ENCODE measurements at regions of chr2 and their contacts with region 1.

Region 1: DNA sequence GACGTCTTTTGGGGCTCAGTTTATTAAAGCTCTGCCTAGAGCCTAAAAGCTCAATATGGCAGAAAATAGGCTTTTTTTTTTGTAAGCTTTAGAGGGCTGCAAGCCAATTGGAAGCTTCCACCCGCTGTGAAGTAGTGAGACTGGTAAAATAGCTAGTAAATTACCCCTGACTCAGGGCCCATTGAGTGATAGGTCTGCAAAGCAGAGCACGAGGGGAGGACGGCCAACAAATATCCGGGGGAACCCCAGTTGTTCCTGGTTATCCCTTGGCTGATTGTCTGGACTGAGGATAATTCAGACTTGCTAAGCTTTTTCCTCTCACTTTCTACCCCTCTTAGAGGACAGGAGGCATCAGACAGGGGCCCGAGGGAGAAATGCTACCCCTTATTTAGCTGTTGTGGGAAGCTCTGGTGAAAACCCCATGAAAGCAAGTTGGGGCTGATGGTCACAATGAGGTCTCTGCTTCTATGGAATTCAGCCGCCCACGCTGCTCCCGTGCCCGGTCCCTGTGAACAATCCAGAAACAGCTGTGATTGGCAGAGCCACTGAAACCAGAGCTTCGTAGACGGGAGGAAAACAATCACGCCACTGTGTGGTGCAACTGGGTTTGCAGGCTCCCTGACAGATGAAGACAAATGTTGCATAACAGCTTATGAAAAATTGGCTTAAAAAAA is 141.9 kb upstream of the LGALSL start:
- DNase-seq: peak; percentile 89
- H3K4me3 ChIP-seq: no peak overlapping the region
- H3K27ac ChIP-seq: no peak overlapping the region
- H3K4me1 ChIP-seq: no peaks in the 10 kb centered on the region
- H3K27me3 ChIP-seq: peaks cover 0 to 7% of the 10 kb centered on the region in 2 experiments
- CTCF ChIP-seq: peak; percentile 48 to 68
- POLR2A ChIP-seq: no peak

Region 2: GRCh38 chr2:64052468-64053241 is 259.4 kb before region 1 on chr2:
- CTCF ChIA-PET with region 1: interaction called, 179 read pairs
- POLR2A ChIA-PET with region 1: no interaction called
- dilution Hi-C with region 1: loop called (anchors 25 kb)
- intact Hi-C with region 1: loop called (anchors 1 kb)
- DNase-seq: peak; percentile 94
- H3K4me3 ChIP-seq: peak overlapping the region in 1 of 3 experiments; percentile 20
- H3K27ac ChIP-seq: peak overlapping the region; percentile 96
- H3K4me1 ChIP-seq: peaks cover 28% of the 10 kb centered on the region
- H3K27me3 ChIP-seq: no peaks in the 10 kb centered on the region
- CTCF ChIP-seq: no peak
- POLR2A ChIP-seq: no peak

Region 3: DNA sequence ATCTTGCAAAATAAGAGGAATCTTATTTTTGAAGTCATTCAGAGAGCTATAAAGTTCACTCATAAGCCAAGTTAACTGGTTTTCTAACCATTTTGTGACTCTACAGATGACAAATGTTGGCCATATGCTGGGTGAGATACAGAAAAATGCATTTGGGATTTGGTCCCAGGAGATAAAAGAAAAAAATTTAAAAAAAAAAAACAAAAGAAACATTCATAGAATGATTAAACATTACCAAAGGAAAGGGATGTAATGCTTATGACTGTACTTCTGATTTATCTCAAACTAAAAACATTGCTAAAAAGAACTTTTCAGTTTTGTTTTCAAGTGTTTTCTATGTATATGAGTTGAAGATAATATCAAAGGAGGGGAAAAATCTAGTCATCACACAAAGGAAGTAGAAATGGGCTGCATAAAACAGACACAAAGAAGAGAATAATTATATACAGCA is 210.9 kb before region 1 on chr2:
- CTCF ChIA-PET with region 1: interaction called, 51 read pairs
- POLR2A ChIA-PET with region 1: no interaction called
- dilution Hi-C with region 1: no loop called
- intact Hi-C with region 1: no loop called
- DNase-seq: peak; percentile 84
- H3K4me3 ChIP-seq: peak overlapping the region in 1 of 3 experiments; percentile 34
- H3K27ac ChIP-seq: peak overlapping the region; percentile 60
- H3K4me1 ChIP-seq: peaks cover 39% of the 10 kb centered on the region
- H3K27me3 ChIP-seq: no peaks in the 10 kb centered on the region
- CTCF ChIP-seq: no peak
- POLR2A ChIP-seq: no peak

Region 4: GRCh38 chr2:64217198-64217869 is 94.8 kb before region 1 on chr2:
- CTCF ChIA-PET with region 1: interaction called, 23 read pairs
- POLR2A ChIA-PET with region 1: no interaction called
- dilution Hi-C with region 1: no loop called
- intact Hi-C with region 1: no loop called
- DNase-seq: no peak
- H3K4me3 ChIP-seq: no peak overlapping the region
- H3K27ac ChIP-seq: no peak overlapping the region
- H3K4me1 ChIP-seq: no peaks in the 10 kb centered on the region
- H3K27me3 ChIP-seq: peaks cover 0 to 2% of the 10 kb centered on the region in 2 experiments
- CTCF ChIP-seq: no peak
- POLR2A ChIP-seq: no peak

Region 5: GRCh38 chr2:64260817-64261216 is 51.3 kb before region 1 on chr2:
- CTCF ChIA-PET with region 1: interaction called, 18 read pairs
- POLR2A ChIA-PET with region 1: no interaction called
- dilution Hi-C with region 1: no loop called
- intact Hi-C with region 1: loop called (anchors 1 kb)
- DNase-seq: peak; percentile 82
- H3K4me3 ChIP-seq: peak overlapping the region in 1 of 3 experiments; percentile 2
- H3K27ac ChIP-seq: peak overlapping the region; percentile 99
- H3K4me1 ChIP-seq: peaks cover 44% of the 10 kb centered on the region
- H3K27me3 ChIP-seq: no peaks in the 10 kb centered on the region
- CTCF ChIP-seq: no peak
- POLR2A ChIP-seq: peak; percentile 48

Region 6: GRCh38 chr2:64273524-64274398 is 38.3 kb before region 1 on chr2:
- CTCF ChIA-PET with region 1: interaction called, 17 read pairs
- POLR2A ChIA-PET with region 1: interaction called, 3 read pairs
- dilution Hi-C with region 1: no loop called
- intact Hi-C with region 1: loop called (anchors 1 kb)
- DNase-seq: peak; percentile 75
- H3K4me3 ChIP-seq: no peak overlapping the region
- H3K27ac ChIP-seq: peak overlapping the region; percentile 75
- H3K4me1 ChIP-seq: peaks cover 54% of the 10 kb centered on the region
- H3K27me3 ChIP-seq: no peaks in the 10 kb centered on the region
- CTCF ChIP-seq: no peak
- POLR2A ChIP-seq: no peak

Region 7: GRCh38 chr2:64653349-64654062 is 341.4 kb after region 1 on chr2 and contains the start of gene SERTAD2:
- CTCF ChIA-PET with region 1: no interaction called
- POLR2A ChIA-PET with region 1: no interaction called
- dilution Hi-C with region 1: no loop called
- intact Hi-C with region 1: no loop called
- DNase-seq: peak; percentile 87
- H3K4me3 ChIP-seq: peak within 1 kb of the TSS; percentile 72 to 89 (median 83)
- H3K27ac ChIP-seq: peak within 1 kb of the TSS; percentile 91
- H3K4me1 ChIP-seq: peaks cover 21% of the 10 kb centered on the region
- H3K27me3 ChIP-seq: no peaks in the 10 kb centered on the region
- CTCF ChIP-seq: peak in 1 of 2 donors; percentile 14
- POLR2A ChIP-seq: peak; percentile 63
- total RNA-seq, gene SERTAD2: 11.2 and 12.0 TPM in 2 replicates

Measured in endothelial cell of umbilical vein (primary cell).